Endothelial cell of umbilical vein (primary cell): ENCODE measurements at regions of chr5 and their contacts with region 1.

Region 1: DNA sequence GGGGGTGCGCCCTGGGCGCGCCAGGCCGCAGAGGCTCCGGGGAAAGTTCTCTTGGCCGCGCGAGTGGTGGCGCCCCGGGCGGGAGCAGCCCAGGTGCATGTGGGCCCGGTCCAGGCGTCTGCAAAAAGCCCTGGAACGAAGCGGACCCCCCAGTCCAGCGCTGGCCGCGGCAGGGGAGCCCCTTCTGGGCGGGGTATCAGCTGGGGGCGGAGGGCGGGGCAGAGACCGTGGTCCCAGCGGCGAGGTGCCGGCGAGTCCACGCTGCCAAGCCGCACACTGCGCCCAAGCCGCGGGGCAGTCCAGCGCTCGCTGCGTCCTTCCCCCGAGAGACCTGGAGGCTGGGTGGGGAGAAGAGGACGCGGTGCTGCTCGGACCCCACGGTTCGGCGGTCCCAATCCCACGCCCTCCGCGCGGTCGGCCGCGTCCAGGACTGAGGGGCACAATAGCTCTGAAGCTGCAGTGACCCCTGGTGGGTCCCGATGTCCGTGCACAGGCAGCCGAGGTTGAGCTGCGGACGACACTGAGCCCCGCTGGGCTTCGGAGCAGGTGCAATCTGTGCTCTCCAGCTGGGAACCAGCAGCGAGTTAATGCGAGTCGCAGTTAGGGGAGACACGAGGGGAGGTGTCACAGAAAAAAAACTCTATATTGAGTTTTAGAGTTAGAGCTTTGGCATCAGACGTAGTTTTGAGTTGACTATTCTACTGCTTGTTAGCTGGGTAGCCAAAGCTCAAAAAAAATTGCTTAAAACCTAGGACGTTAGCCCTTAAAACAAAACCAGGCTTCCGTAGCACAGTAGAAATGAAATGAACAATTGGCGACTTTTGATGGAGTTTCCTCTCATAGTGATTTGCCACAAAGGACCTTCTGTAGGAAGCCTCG is 1.1 kb upstream of the EPB41L4A start:
- DNase-seq: peak; percentile 88
- H3K4me3 ChIP-seq: peak overlapping the region; percentile 80 to 97 (median 91)
- H3K27ac ChIP-seq: no peak overlapping the region
- H3K4me1 ChIP-seq: peaks cover 7% of the 10 kb centered on the region
- H3K27me3 ChIP-seq: no peaks in the 10 kb centered on the region
- CTCF ChIP-seq: peak; percentile 92 to 93
- POLR2A ChIP-seq: peak; percentile 10

Region 2: GRCh38 chr5:111512375-111513130 is 907.7 kb before region 1 on chr5 and contains the start of gene STARD4:
- CTCF ChIA-PET with region 1: no interaction called
- POLR2A ChIA-PET with region 1: no interaction called
- dilution Hi-C with region 1: no loop called
- intact Hi-C with region 1: loop called (anchors 5 kb)
- DNase-seq: peak; percentile 97
- H3K4me3 ChIP-seq: peak within 1 kb of the TSS; percentile 72 to 97 (median 81)
- H3K27ac ChIP-seq: peak within 1 kb of the TSS; percentile 95
- H3K4me1 ChIP-seq: peaks cover 30% of the 10 kb centered on the region
- H3K27me3 ChIP-seq: no peaks in the 10 kb centered on the region
- CTCF ChIP-seq: no peak
- POLR2A ChIP-seq: peak; percentile 61
- total RNA-seq, gene STARD4: 77.1 and 87.8 TPM in 2 replicates

Region 3: GRCh38 chr5:112174959-112175594 is 245.1 kb before region 1 on chr5:
- CTCF ChIA-PET with region 1: interaction called, 230 read pairs
- POLR2A ChIA-PET with region 1: no interaction called
- dilution Hi-C with region 1: no loop called
- intact Hi-C with region 1: loop called (anchors 1 kb)
- DNase-seq: peak; percentile 58
- H3K4me3 ChIP-seq: no peak overlapping the region
- H3K27ac ChIP-seq: no peak overlapping the region
- H3K4me1 ChIP-seq: no peaks in the 10 kb centered on the region
- H3K27me3 ChIP-seq: no peaks in the 10 kb centered on the region
- CTCF ChIP-seq: peak; percentile 55 to 57
- POLR2A ChIP-seq: no peak

Region 4: GRCh38 chr5:112210430-112211005 is 209.7 kb before region 1 on chr5:
- CTCF ChIA-PET with region 1: interaction called, 184 read pairs
- POLR2A ChIA-PET with region 1: interaction called, 3 read pairs
- dilution Hi-C with region 1: no loop called
- intact Hi-C with region 1: loop called (anchors 1 kb)
- DNase-seq: peak; percentile 63
- H3K4me3 ChIP-seq: no peak overlapping the region
- H3K27ac ChIP-seq: no peak overlapping the region
- H3K4me1 ChIP-seq: no peaks in the 10 kb centered on the region
- H3K27me3 ChIP-seq: no peaks in the 10 kb centered on the region
- CTCF ChIP-seq: peak; percentile 55 to 66
- POLR2A ChIP-seq: no peak

Region 5: DNA sequence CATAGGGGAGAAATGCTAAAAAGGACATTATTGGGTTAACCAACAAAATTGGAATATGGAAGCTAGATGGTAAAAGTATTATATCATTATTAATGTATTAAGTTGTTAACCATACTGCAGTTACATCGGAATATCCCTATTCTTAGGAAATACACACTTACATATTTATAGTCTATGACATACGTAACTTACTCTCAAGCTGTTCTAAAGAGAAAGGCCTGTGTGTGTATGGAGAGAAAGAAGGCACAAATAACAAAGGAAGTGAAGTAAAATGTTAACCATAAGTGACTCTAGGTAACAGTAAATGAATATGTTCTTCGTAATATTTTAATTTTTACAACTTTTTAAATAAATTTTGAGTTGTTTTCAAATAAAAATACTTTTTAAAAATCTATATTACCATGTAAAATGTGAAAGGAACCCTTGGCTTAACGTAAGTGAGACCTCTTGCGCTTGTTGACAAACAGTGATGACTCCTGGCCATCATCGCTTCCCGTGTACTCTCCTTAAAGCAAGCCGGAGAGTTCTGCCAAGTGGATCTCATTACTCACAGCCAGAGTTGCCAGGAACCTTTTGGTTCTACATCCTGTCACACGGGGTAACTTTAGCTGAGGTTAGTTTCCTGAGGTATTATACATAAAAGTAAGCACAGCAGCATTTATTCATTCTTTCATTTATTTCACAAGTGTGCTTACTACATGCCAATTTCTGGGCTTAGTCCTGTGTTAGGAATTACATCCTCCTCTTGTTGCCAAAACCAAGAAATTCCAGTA is 166.6 kb before region 1 on chr5:
- CTCF ChIA-PET with region 1: interaction called, 13 read pairs
- POLR2A ChIA-PET with region 1: no interaction called
- dilution Hi-C with region 1: no loop called
- intact Hi-C with region 1: no loop called
- DNase-seq: peak; percentile 81
- H3K4me3 ChIP-seq: no peak overlapping the region
- H3K27ac ChIP-seq: peak overlapping the region; percentile 1
- H3K4me1 ChIP-seq: peaks cover 17% of the 10 kb centered on the region
- H3K27me3 ChIP-seq: no peaks in the 10 kb centered on the region
- CTCF ChIP-seq: no peak
- POLR2A ChIP-seq: no peak

Region 6: DNA sequence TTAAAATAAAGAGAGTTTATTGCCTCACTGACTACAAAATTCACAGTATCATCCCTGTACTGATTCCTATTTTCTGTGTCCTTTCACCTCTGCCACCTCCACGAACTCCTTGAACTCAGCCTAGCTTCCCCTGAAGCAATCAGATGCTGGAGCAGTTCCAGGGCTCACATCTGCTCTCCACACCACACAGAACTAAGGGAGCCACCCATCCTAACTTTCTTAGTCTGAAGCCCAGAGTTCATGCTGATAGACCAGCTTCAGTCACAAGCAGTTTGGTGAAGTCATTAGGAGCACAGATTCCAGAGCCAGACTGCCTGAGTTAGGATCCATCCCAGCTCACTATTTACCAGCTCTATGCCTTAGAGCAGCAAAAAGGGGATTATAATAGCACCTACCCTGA is 14.4 kb after region 1 on chr5:
- CTCF ChIA-PET with region 1: interaction called, 36 read pairs
- POLR2A ChIA-PET with region 1: no interaction called
- dilution Hi-C with region 1: no loop called
- intact Hi-C with region 1: no loop called
- DNase-seq: no peak
- H3K4me3 ChIP-seq: no peak overlapping the region
- H3K27ac ChIP-seq: no peak overlapping the region
- H3K4me1 ChIP-seq: no peaks in the 10 kb centered on the region
- H3K27me3 ChIP-seq: peaks cover 0 to 4% of the 10 kb centered on the region in 2 experiments
- CTCF ChIP-seq: no peak
- POLR2A ChIP-seq: no peak

Region 7: GRCh38 chr5:112529525-112529924 is 109.3 kb after region 1 on chr5:
- CTCF ChIA-PET with region 1: interaction called, 34 read pairs
- POLR2A ChIA-PET with region 1: no interaction called
- dilution Hi-C with region 1: no loop called
- intact Hi-C with region 1: loop called (anchors 1 kb)
- DNase-seq: peak; percentile 46
- H3K4me3 ChIP-seq: no peak overlapping the region
- H3K27ac ChIP-seq: no peak overlapping the region
- H3K4me1 ChIP-seq: no peaks in the 10 kb centered on the region
- H3K27me3 ChIP-seq: peaks cover 0 to 1% of the 10 kb centered on the region in 2 experiments
- CTCF ChIP-seq: peak; percentile 35 to 42
- POLR2A ChIP-seq: no peak

Region 8: GRCh38 chr5:112560371-112560770 is 140.1 kb after region 1 on chr5:
- CTCF ChIA-PET with region 1: no interaction called
- POLR2A ChIA-PET with region 1: no interaction called
- dilution Hi-C with region 1: no loop called
- intact Hi-C with region 1: no loop called
- DNase-seq: no peak
- H3K4me3 ChIP-seq: no peak overlapping the region
- H3K27ac ChIP-seq: no peak overlapping the region
- H3K4me1 ChIP-seq: no peaks in the 10 kb centered on the region
- H3K27me3 ChIP-seq: no peaks in the 10 kb centered on the region
- CTCF ChIP-seq: no peak
- POLR2A ChIP-seq: no peak

Region 9: DNA sequence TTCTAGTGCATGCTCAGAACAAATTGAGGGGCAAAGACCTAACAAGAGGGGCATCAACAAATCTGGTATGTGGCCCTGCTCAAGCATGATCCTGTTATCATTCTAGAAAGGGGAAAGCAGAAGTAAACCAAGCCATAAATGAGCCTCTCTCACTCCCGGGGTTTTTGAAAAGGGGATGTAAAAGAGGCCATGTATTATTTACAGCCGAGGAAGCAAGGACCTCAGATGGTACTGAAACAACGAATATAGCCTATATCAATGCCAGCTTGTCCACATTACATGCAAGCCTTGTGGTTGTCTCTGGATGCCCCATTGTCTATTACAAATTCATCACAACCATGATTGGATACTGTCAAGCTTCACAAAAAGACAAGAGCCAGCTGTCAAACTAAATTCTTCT is 767.7 kb after region 1 on chr5:
- CTCF ChIA-PET with region 1: no interaction called
- POLR2A ChIA-PET with region 1: no interaction called
- dilution Hi-C with region 1: no loop called
- intact Hi-C with region 1: no loop called
- DNase-seq: no peak
- H3K4me3 ChIP-seq: no peak overlapping the region
- H3K27ac ChIP-seq: no peak overlapping the region
- H3K4me1 ChIP-seq: no peaks in the 10 kb centered on the region
- H3K27me3 ChIP-seq: no peaks in the 10 kb centered on the region
- CTCF ChIP-seq: no peak
- POLR2A ChIP-seq: no peak